Heart left ventricle (tissue), 16 donors: ENCODE measurements at regions of chr20 and their contacts with region 1.

Region 1: GRCh38 chr20:49534255-49534712 is 33.7 kb downstream of the PTGIS start:
- DNase-seq: peak in 1 of 5 donors; percentile 39
- ATAC-seq: peak in 3 of 4 donors; percentile 70 to 81 (median 71)
- H3K4me3 ChIP-seq: no peak overlapping the region
- H3K27ac ChIP-seq: no peak overlapping the region
- H3K4me1 ChIP-seq: peaks cover 0 to 7% (median 0%) of the 10 kb centered on the region in 12 donors
- H3K27me3 ChIP-seq: no peaks in the 10 kb centered on the region
- CTCF ChIP-seq: peak; percentile 67 to 87 (median 80)
- POLR2A ChIP-seq: no peak

Region 2: GRCh38 chr20:49330544-49331239 is 203.6 kb before region 1 on chr20:
- intact Hi-C with region 1: loop called (anchors 1 to 5 kb)
- DNase-seq: no peak
- ATAC-seq: no peak
- H3K4me3 ChIP-seq: no peak overlapping the region
- H3K27ac ChIP-seq: no peak overlapping the region
- H3K4me1 ChIP-seq: no peaks in the 10 kb centered on the region
- H3K27me3 ChIP-seq: peaks cover 0 to 28% (median 7%) of the 10 kb centered on the region in 9 donors
- CTCF ChIP-seq: no peak
- POLR2A ChIP-seq: no peak

Region 3: GRCh38 chr20:49338061-49338460 is 196.2 kb before region 1 on chr20:
- intact Hi-C with region 1: loop called (anchors 1 to 5 kb)
- DNase-seq: no peak
- ATAC-seq: no peak
- H3K4me3 ChIP-seq: no peak overlapping the region
- H3K27ac ChIP-seq: no peak overlapping the region
- H3K4me1 ChIP-seq: no peaks in the 10 kb centered on the region
- H3K27me3 ChIP-seq: peaks cover 0 to 7% (median 0%) of the 10 kb centered on the region in 9 donors
- CTCF ChIP-seq: no peak
- POLR2A ChIP-seq: no peak